Naive thymus-derived CD4-positive, alpha-beta T cell (primary cell): ENCODE measurements at regions of chr1 and their contacts with region 1.

Region 1: GRCh38 chr1:161132410-161133219 is at the start of gene DEDD:
- DNase-seq: peak; percentile 80 to 93 (median 90)
- ATAC-seq: peak; percentile 97
- H3K4me3 ChIP-seq: peak within 1 kb of the TSS; percentile 96
- H3K4me3 Mint-ChIP-seq: no peak within 1 kb of the TSS
- H3K27ac ChIP-seq: peak within 1 kb of the TSS; percentile 89
- H3K27ac Mint-ChIP-seq: peak within 1 kb of the TSS in 4 of 9 donors; percentile 85 to 97 (median 94)
- H3K4me1 ChIP-seq: peaks cover 21 to 37% of the 10 kb centered on the region in 2 donors
- H3K4me1 Mint-ChIP-seq: peaks cover 29 to 49% (median 48%) of the 10 kb centered on the region in 7 donors
- H3K27me3 ChIP-seq: no peaks in the 10 kb centered on the region
- H3K27me3 Mint-ChIP-seq: no peaks in the 10 kb centered on the region
- total RNA-seq, gene DEDD: 34.3 to 43.0 (median 36.0) TPM

Region 2: GRCh38 chr1:160342953-160343869 is 789.4 kb before region 1 on chr1 and contains the starts of genes COPA and NCSTN:
- CTCF ChIA-PET with region 1: no interaction called
- POLR2A ChIA-PET with region 1: no interaction called
- intact Hi-C with region 1: loop called in 1 of 2 experiments (anchors 10 kb)
- DNase-seq: peak; percentile 67 to 93 (median 86)
- ATAC-seq: peak; percentile 98
- H3K4me3 ChIP-seq: peak within 1 kb of the TSS; percentile 87
- H3K4me3 Mint-ChIP-seq: peak within 1 kb of the TSS; percentile 99 to 100 (median 100)
- H3K27ac ChIP-seq: peak within 1 kb of the TSS; percentile 98
- H3K27ac Mint-ChIP-seq: peak within 1 kb of the TSS; percentile 98 to 100 (median 100)
- H3K4me1 ChIP-seq: peaks cover 23 to 29% of the 10 kb centered on the region in 2 donors
- H3K4me1 Mint-ChIP-seq: peaks cover 32 to 78% (median 66%) of the 10 kb centered on the region in 7 donors
- H3K27me3 ChIP-seq: no peaks in the 10 kb centered on the region
- H3K27me3 Mint-ChIP-seq: no peaks in the 10 kb centered on the region
- total RNA-seq, gene COPA: 104 to 151 (median 118) TPM
- total RNA-seq, gene NCSTN: 68.4 to 91.1 (median 73.5) TPM

Region 3: GRCh38 chr1:160366731-160367515 is 765.7 kb before region 1 on chr1 and contains the start of gene NHLH1:
- CTCF ChIA-PET with region 1: no interaction called
- POLR2A ChIA-PET with region 1: no interaction called
- intact Hi-C with region 1: no loop called
- DNase-seq: peak in 1 of 9 donors; percentile 14
- ATAC-seq: no peak
- H3K4me3 ChIP-seq: no peak within 1 kb of the TSS
- H3K4me3 Mint-ChIP-seq: no peak within 1 kb of the TSS
- H3K27ac ChIP-seq: no peak within 1 kb of the TSS
- H3K27ac Mint-ChIP-seq: peak within 1 kb of the TSS in 2 of 9 donors; percentile 37 to 48
- H3K4me1 ChIP-seq: no peaks in the 10 kb centered on the region
- H3K4me1 Mint-ChIP-seq: peaks cover 0 to 8% (median 4%) of the 10 kb centered on the region in 7 donors
- H3K27me3 ChIP-seq: no peaks in the 10 kb centered on the region
- H3K27me3 Mint-ChIP-seq: no peaks in the 10 kb centered on the region
- total RNA-seq, gene NHLH1: 0.11 to 0.58 (median 0.42) TPM

Region 4: GRCh38 chr1:160813215-160813614 is 319.4 kb before region 1 on chr1:
- CTCF ChIA-PET with region 1: no interaction called
- POLR2A ChIA-PET with region 1: no interaction called
- intact Hi-C with region 1: no loop called
- DNase-seq: no peak
- ATAC-seq: peak; percentile 44
- H3K4me3 ChIP-seq: no peak overlapping the region
- H3K4me3 Mint-ChIP-seq: no peak overlapping the region
- H3K27ac ChIP-seq: no peak overlapping the region
- H3K27ac Mint-ChIP-seq: peak overlapping the region in 8 of 9 donors; percentile 44 to 86 (median 82)
- H3K4me1 ChIP-seq: peaks cover 0 to 12% of the 10 kb centered on the region in 2 donors
- H3K4me1 Mint-ChIP-seq: peaks cover 7 to 62% (median 54%) of the 10 kb centered on the region in 7 donors
- H3K27me3 ChIP-seq: no peaks in the 10 kb centered on the region
- H3K27me3 Mint-ChIP-seq: peaks cover 0 to 5% (median 0%) of the 10 kb centered on the region in 5 donors

Region 5: DNA sequence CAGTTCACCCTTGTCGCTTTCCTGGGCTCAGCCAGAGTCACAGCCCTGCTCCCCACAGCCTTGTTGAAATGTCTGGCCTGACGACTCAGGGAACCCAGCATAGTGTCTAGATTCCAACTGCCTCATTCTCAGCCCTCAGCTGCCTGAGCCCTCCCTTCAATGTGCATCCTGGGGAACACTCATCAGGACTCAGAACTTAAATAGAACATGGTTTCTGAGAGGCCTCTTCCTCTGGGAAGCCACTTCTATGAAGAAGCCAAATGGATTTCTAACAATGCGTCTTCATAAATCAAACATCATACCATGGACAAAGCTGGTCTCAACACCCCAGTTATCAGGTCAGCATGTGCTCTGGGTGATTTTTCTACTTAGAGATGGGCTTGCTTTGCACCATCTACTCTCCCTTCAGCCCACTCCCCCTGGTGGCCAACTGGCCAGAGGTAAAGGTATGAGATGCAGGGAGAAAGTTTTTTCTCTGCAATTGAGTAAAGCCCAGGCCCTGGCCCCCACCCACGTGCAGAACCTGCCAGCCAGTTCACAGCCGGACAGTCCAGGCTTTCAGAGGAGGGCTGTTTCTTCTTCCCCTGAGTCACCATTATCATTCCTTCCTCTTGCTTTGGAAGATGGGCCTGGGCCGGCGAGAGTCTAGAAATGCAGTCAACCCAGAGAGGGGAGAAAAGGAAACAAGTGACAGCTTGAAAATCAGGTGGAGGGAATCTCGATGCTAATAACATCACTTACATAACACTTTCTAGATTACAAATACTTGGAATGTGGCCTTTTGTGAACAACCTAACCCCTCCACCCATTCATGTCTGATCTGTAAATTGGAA is 302.1 kb before region 1 on chr1:
- CTCF ChIA-PET with region 1: no interaction called
- POLR2A ChIA-PET with region 1: no interaction called
- intact Hi-C with region 1: loop called (anchors 5 to 10 kb)
- DNase-seq: peak; percentile 51 to 77 (median 67)
- ATAC-seq: peak; percentile 75
- H3K4me3 ChIP-seq: no peak overlapping the region
- H3K4me3 Mint-ChIP-seq: no peak overlapping the region
- H3K27ac ChIP-seq: peak overlapping the region; percentile 10
- H3K27ac Mint-ChIP-seq: peak overlapping the region in 8 of 9 donors; percentile 68 to 96 (median 86)
- H3K4me1 ChIP-seq: peaks cover 6 to 18% of the 10 kb centered on the region in 2 donors
- H3K4me1 Mint-ChIP-seq: peaks cover 20 to 54% (median 36%) of the 10 kb centered on the region in 7 donors
- H3K27me3 ChIP-seq: no peaks in the 10 kb centered on the region
- H3K27me3 Mint-ChIP-seq: no peaks in the 10 kb centered on the region

Region 6: GRCh38 chr1:161071886-161072371 is 60.7 kb before region 1 on chr1:
- CTCF ChIA-PET with region 1: interaction called, 3 read pairs
- POLR2A ChIA-PET with region 1: interaction called, 19 read pairs
- intact Hi-C with region 1: loop called in 1 of 2 experiments (anchors 1 kb)
- DNase-seq: peak; percentile 18 to 50 (median 43)
- ATAC-seq: no peak
- H3K4me3 ChIP-seq: no peak overlapping the region
- H3K4me3 Mint-ChIP-seq: peak overlapping the region in 4 of 10 donors; percentile 11 to 46 (median 19)
- H3K27ac ChIP-seq: no peak overlapping the region
- H3K27ac Mint-ChIP-seq: peak overlapping the region; percentile 27 to 99 (median 91)
- H3K4me1 ChIP-seq: peaks cover 19 to 31% of the 10 kb centered on the region in 2 donors
- H3K4me1 Mint-ChIP-seq: peaks cover 21 to 47% (median 42%) of the 10 kb centered on the region in 7 donors
- H3K27me3 ChIP-seq: no peaks in the 10 kb centered on the region
- H3K27me3 Mint-ChIP-seq: no peaks in the 10 kb centered on the region

Region 7: DNA sequence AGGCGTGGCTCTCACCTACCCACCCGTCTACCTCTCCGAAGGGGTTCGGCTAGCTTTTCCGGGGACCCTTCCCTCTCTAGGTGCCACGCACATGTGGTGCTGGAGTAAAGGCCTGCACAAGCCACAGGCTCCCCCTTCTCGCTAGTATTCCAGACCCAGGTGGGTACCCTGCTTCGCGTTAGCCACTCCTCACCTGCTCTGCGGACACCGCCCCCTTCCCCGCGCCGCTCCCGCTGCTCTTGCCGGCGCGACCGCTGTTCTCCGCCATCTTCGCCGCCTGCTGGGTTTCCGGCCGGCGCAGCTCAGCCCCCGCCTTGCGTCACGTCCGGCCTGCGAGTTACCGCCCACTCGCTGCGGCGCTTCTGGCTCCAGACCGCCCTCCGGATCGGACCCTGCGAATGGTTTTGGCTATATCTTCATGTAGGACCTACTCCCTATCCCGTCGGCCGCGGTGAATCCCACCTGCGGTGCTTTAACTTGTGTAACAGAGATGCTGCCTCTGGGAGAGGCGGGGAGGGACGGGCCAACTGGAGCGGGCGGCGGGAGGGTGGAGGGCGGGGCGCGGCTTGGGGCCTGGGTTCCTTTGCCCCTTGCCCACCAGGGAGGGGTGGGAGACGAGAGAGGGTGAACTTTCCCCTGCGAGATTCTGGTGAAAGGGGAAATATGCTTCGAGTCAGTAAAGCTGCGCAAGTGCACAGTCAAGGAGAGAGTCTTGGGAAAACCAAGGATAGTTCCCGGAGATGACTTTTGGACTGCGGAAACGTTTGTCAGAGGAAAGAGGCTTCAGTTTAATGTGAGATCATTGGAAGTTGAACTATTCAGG is 14.6 kb before region 1 on chr1 and contains the starts of genes NIT1 and PFDN2:
- CTCF ChIA-PET with region 1: interaction called, 5 read pairs
- POLR2A ChIA-PET with region 1: interaction called, 15 read pairs
- intact Hi-C with region 1: loop called (anchors 1 kb)
- DNase-seq: peak; percentile 76 to 90 (median 85)
- ATAC-seq: peak; percentile 86
- H3K4me3 ChIP-seq: peak within 1 kb of the TSS; percentile 99
- H3K4me3 Mint-ChIP-seq: peak within 1 kb of the TSS; percentile 92 to 99 (median 95)
- H3K27ac ChIP-seq: peak within 1 kb of the TSS; percentile 92
- H3K27ac Mint-ChIP-seq: peak within 1 kb of the TSS; percentile 57 to 99 (median 93)
- H3K4me1 ChIP-seq: peaks cover 31 to 35% of the 10 kb centered on the region in 2 donors
- H3K4me1 Mint-ChIP-seq: peaks cover 44 to 82% (median 78%) of the 10 kb centered on the region in 7 donors
- H3K27me3 ChIP-seq: no peaks in the 10 kb centered on the region
- H3K27me3 Mint-ChIP-seq: no peaks in the 10 kb centered on the region
- total RNA-seq, gene NIT1: 23.3 to 49.6 (median 41.8) TPM
- total RNA-seq, gene PFDN2: 32.0 to 67.9 (median 34.0) TPM

Region 8: DNA sequence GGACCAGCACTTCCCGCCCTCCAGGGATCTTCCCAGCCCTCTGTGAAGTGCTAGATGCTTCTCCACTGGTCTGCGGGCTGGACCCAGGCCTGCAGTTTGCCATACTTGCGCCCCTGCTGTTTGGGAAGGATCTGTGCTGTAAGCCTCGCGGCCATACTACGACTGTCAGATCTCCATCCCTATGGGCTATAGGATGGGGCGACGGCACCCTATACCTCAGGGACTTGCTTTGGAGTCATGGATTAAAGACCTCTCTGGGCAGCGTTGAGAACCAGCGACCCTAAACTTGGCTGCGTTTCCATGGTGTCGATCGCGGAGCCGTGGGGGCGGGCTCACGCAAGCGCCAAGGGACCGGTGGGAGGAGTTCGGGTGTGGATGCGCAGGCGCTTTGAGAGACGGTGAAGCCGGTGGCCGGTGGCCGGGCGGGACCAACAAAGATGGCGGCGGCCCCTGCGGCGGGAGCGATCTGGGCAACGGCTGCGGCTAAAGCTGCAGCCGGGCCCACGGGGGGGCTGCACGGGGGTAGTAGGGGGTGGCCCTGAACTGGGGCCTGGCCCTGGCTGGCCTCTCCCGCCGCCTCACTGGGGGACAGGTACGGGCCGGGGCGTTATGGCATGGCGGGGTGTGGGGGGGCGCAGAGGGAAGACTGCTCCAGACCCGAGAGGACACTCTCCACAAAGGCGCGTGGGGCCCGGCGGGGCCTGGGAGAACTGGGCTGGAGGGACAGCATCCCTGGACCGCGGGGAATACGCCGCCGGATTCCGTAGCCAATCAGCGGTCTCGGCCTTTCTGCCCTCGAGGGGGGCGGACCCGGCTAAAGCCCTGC is 26.7 kb after region 1 on chr1 and contains the start of gene USP21:
- CTCF ChIA-PET with region 1: interaction called, 3 read pairs
- POLR2A ChIA-PET with region 1: interaction called, 39 read pairs
- intact Hi-C with region 1: loop called (anchors 1 kb)
- DNase-seq: peak; percentile 86 to 93 (median 91)
- ATAC-seq: peak; percentile 95
- H3K4me3 ChIP-seq: peak within 1 kb of the TSS; percentile 68
- H3K4me3 Mint-ChIP-seq: peak within 1 kb of the TSS; percentile 88 to 94 (median 92)
- H3K27ac ChIP-seq: peak within 1 kb of the TSS; percentile 84
- H3K27ac Mint-ChIP-seq: peak within 1 kb of the TSS; percentile 89 to 97 (median 93)
- H3K4me1 ChIP-seq: peaks cover 31 to 34% of the 10 kb centered on the region in 2 donors
- H3K4me1 Mint-ChIP-seq: peaks cover 35 to 76% (median 67%) of the 10 kb centered on the region in 7 donors
- H3K27me3 ChIP-seq: no peaks in the 10 kb centered on the region
- H3K27me3 Mint-ChIP-seq: no peaks in the 10 kb centered on the region
- total RNA-seq, gene USP21: 36.0 to 66.0 (median 38.6) TPM

Region 9: GRCh38 chr1:161201828-161202725 is 69.5 kb after region 1 on chr1 and contains the start of gene NDUFS2:
- CTCF ChIA-PET with region 1: no interaction called
- POLR2A ChIA-PET with region 1: no interaction called
- intact Hi-C with region 1: loop called in 1 of 2 experiments (anchors 1 kb)
- DNase-seq: peak; percentile 71 to 98 (median 92)
- ATAC-seq: peak; percentile 99
- H3K4me3 ChIP-seq: peak within 1 kb of the TSS; percentile 78
- H3K4me3 Mint-ChIP-seq: peak within 1 kb of the TSS; percentile 90 to 98 (median 95)
- H3K27ac ChIP-seq: peak within 1 kb of the TSS; percentile 97
- H3K27ac Mint-ChIP-seq: peak within 1 kb of the TSS; percentile 96 to 99 (median 98)
- H3K4me1 ChIP-seq: peaks cover 35 to 60% of the 10 kb centered on the region in 2 donors
- H3K4me1 Mint-ChIP-seq: peaks cover 36 to 83% (median 66%) of the 10 kb centered on the region in 7 donors
- H3K27me3 ChIP-seq: no peaks in the 10 kb centered on the region
- H3K27me3 Mint-ChIP-seq: no peaks in the 10 kb centered on the region
- total RNA-seq, gene NDUFS2: 64.1 to 131 (median 85.3) TPM